ENCODE measurements at regions of chr1 and their contacts with region 1.

Region 1: GRCh38 chr1:65209005-65209885 is 61.2 kb downstream of the AK4 start:
- DNase-seq: peak; percentile 30
- H3K4me3 ChIP-seq: no peak overlapping the region
- H3K27ac ChIP-seq: no peak overlapping the region
- H3K4me1 ChIP-seq: no peaks in the 10 kb centered on the region
- H3K27me3 ChIP-seq: no peaks in the 10 kb centered on the region
- CTCF ChIP-seq: peak; percentile 42 to 66

Region 2: GRCh38 chr1:65059930-65060538 is 149.2 kb before region 1 on chr1:
- CTCF ChIA-PET with region 1: no interaction called
- dilution Hi-C with region 1: no loop called
- in situ Hi-C with region 1: loop called (anchors 5 kb)
- intact Hi-C with region 1: loop called (anchors 1 kb)
- DNase-seq: peak; percentile 25
- H3K4me3 ChIP-seq: no peak overlapping the region
- H3K27ac ChIP-seq: no peak overlapping the region
- H3K4me1 ChIP-seq: no peaks in the 10 kb centered on the region
- H3K27me3 ChIP-seq: no peaks in the 10 kb centered on the region
- CTCF ChIP-seq: peak; percentile 54 to 72

Region 3: GRCh38 chr1:65067491-65068201 is 141.6 kb before region 1 on chr1:
- CTCF ChIA-PET with region 1: no interaction called
- dilution Hi-C with region 1: no loop called
- in situ Hi-C with region 1: loop called (anchors 5 kb)
- intact Hi-C with region 1: no loop called
- DNase-seq: peak; percentile 71
- H3K4me3 ChIP-seq: peak overlapping the region; percentile 65 to 80 (median 75)
- H3K27ac ChIP-seq: peak overlapping the region; percentile 18
- H3K4me1 ChIP-seq: peaks cover 14% of the 10 kb centered on the region
- H3K27me3 ChIP-seq: no peaks in the 10 kb centered on the region
- CTCF ChIP-seq: no peak

Region 4: GRCh38 chr1:65148548-65149350 is 60.5 kb before region 1 on chr1:
- CTCF ChIA-PET with region 1: no interaction called
- dilution Hi-C with region 1: no loop called
- in situ Hi-C with region 1: no loop called
- intact Hi-C with region 1: loop called (anchors 1 kb)
- DNase-seq: peak; percentile 63
- H3K4me3 ChIP-seq: peak overlapping the region; percentile 63 to 94 (median 94)
- H3K27ac ChIP-seq: peak overlapping the region; percentile 49
- H3K4me1 ChIP-seq: peaks cover 11% of the 10 kb centered on the region
- H3K27me3 ChIP-seq: no peaks in the 10 kb centered on the region
- CTCF ChIP-seq: no peak

Region 5: GRCh38 chr1:65235867-65236805 is 26.9 kb after region 1 on chr1:
- CTCF ChIA-PET with region 1: no interaction called
- dilution Hi-C with region 1: no loop called
- in situ Hi-C with region 1: no loop called
- intact Hi-C with region 1: no loop called
- DNase-seq: peak; percentile 33
- H3K4me3 ChIP-seq: no peak overlapping the region
- H3K27ac ChIP-seq: no peak overlapping the region
- H3K4me1 ChIP-seq: peaks cover under 1% of the 10 kb centered on the region
- H3K27me3 ChIP-seq: no peaks in the 10 kb centered on the region
- CTCF ChIP-seq: peak; percentile 60 to 61

Measured in mammary epithelial cell (primary cell).